ENCODE measurements at regions of chr11 and their contacts with region 1.

Region 1: DNA sequence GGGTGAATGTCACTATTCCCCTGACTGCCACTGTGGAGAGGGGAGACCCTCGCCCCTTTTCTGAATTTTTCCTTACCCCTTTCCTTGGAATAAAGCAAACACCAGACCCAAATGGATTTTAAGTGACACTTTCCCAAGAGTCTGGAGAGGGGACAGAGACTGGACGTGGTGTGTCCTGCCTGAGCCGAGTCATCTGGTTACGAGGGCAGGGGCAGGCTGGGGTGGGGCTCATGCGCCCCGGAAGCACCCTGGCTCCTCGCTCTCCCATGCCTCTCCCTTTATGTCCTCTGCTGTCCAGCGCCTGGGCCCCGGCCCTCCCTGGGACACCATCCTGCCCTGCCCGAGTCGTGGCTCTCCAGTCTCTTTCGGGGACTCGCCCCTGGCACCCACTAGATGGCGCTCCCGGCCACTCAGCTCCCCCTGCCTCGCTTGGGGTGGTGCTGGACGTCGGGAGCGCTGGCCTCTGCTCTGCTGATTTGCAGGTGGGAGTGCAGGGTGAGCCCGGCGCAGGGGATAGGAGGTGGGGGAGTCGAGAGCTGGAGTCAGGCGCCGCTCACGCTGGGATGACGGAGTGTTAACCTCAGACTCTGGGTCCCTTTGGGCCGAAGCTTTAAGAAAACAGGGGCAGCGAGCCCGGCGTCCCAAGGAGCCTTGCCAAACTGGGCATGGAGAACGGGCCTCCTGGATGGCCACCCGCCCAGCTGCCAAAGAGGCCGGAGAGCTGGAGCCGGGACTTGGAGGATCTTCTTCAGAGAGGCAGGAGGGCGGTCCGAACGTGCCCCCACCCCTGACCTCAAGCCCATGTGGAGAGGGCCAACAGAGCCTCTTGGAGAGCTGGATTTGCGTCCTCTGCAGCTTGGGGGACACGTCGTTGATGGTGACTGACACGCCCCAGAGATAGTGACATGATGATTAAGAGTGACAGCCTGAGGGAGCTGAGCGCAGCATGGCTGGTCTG is 89.9 kb downstream of the RPS6KA4 start:
- DNase-seq: peak; percentile 84
- H3K4me3 Mint-ChIP-seq: peak overlapping the region; percentile 57
- H3K27ac Mint-ChIP-seq: no peak overlapping the region
- H3K4me1 Mint-ChIP-seq: peaks cover 13% of the 10 kb centered on the region
- H3K27me3 Mint-ChIP-seq: peaks cover 17% of the 10 kb centered on the region

Region 2: DNA sequence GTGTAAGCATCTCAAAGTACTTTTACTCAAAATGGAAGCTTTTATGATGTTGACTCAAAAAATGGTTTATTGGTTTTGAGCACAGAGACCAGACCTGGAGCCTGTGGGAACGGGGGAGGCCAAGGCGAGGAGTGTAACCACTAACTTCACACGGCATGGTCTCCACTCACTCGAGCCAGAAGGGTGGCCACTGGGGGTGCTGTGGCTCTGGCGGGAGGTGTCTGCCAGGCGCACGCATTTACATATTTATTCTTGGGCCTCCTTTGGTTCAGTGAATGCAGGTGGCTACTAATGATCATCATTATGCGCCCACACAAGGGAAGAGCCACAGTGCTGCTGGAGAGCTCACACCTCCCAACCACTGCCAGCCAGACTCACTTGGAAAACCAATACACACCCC is 348.5 kb before region 1 on chr11:
- CTCF ChIA-PET with region 1: no interaction called
- POLR2A ChIA-PET with region 1: no interaction called
- intact Hi-C with region 1: no loop called
- DNase-seq: no peak
- H3K4me3 Mint-ChIP-seq: no peak overlapping the region
- H3K27ac Mint-ChIP-seq: no peak overlapping the region
- H3K4me1 Mint-ChIP-seq: no peaks in the 10 kb centered on the region
- H3K27me3 Mint-ChIP-seq: no peaks in the 10 kb centered on the region

Region 3: DNA sequence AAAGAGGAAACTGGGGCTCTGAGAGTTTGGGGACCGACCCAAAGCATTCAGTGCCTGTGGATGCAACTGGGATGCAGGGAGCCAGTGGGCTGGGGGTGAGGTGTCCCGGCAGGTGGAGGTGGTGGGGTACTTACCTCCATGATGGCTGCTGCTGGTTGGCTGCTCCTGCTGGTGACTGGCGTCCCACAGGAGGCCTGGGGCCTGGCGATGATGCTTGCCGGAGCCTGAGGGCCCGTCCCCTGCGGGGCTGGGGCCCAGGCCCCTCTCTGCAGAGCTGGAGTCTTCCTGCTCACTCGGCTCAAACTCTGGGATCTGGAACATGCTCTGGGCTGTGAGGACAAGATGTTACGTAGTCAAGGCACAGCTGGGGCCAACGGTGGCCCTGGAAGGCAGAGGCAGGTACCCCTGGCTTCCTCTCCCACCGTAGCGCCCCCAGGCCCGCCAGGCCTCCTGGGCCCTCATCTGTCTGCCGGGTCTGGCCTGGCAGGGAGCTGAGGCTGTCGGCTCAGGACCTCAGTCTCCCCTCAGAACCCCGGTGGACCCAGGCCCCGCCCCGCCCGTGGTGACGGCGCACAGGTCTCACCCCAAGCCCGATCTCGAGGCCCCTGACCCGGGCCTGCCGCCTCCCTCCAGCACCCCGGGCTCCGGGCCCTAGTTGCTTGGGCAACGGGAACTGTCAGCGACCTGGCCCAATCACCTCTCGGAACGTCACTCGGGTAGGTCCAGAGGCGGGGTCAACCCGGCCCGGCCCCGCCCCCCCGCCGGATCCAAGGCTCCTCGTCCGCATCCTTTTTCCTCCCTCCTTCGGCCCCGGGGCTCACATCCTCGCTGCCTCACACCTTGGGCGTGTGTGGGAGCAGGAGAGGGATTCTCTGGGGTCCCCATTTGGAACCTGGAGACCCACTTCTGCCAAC is 164.6 kb before region 1 on chr11 and contains the start of gene BAD:
- CTCF ChIA-PET with region 1: no interaction called
- POLR2A ChIA-PET with region 1: no interaction called
- intact Hi-C with region 1: no loop called
- DNase-seq: peak; percentile 96
- H3K4me3 Mint-ChIP-seq: peak within 1 kb of the TSS; percentile 83
- H3K27ac Mint-ChIP-seq: peak within 1 kb of the TSS; percentile 91
- H3K4me1 Mint-ChIP-seq: peaks cover 14% of the 10 kb centered on the region
- H3K27me3 Mint-ChIP-seq: no peaks in the 10 kb centered on the region
- total RNA-seq, gene BAD: 23.7 to 24.2 TPM

Region 4: GRCh38 chr11:64358907-64359711 is 89.8 kb before region 1 on chr11 and contains the start of gene RPS6KA4:
- CTCF ChIA-PET with region 1: interaction called, 13 read pairs
- POLR2A ChIA-PET with region 1: interaction called, 3 read pairs
- intact Hi-C with region 1: loop called (anchors 2 kb)
- DNase-seq: peak; percentile 68
- H3K4me3 Mint-ChIP-seq: peak within 1 kb of the TSS; percentile 91
- H3K27ac Mint-ChIP-seq: peak within 1 kb of the TSS; percentile 58
- H3K4me1 Mint-ChIP-seq: peaks cover 37% of the 10 kb centered on the region
- H3K27me3 Mint-ChIP-seq: no peaks in the 10 kb centered on the region
- total RNA-seq, gene RPS6KA4: 31.4 to 34.3 TPM

Region 5: DNA sequence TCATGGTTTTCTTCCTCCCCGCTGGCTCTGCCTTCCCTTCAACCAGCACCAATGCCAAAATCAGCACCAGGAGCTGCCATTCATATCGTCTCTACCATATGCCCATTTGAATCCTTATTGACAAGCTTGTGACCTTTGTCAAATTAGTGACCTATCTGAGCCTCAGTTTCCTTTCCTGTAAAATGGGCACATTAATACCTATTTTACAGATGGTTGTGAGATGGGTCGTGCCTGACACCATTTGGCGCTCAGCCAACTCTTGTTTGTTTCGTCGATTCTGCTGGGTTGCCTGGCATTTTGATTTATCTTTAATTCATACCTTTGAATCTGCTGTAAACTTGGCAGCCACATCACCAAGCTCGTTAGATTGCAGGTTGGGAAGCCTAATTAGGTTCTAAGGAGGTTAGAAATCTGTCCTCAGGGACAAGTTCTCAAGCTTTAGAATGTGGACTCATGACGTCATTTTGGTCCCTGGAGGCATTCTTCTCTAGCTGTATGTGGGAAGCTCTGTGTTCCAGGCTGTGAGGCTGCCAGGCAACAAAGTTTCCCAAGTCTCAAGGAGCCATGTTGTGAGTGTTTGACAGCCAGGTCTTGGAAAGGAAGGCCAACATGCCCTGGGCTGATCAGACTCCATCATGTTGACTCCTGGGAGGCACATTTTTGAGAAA is 28.9 kb before region 1 on chr11:
- CTCF ChIA-PET with region 1: interaction called, 14 read pairs
- POLR2A ChIA-PET with region 1: no interaction called
- intact Hi-C with region 1: no loop called
- DNase-seq: no peak
- H3K4me3 Mint-ChIP-seq: no peak overlapping the region
- H3K27ac Mint-ChIP-seq: no peak overlapping the region
- H3K4me1 Mint-ChIP-seq: no peaks in the 10 kb centered on the region
- H3K27me3 Mint-ChIP-seq: peaks cover 4% of the 10 kb centered on the region

Region 6: DNA sequence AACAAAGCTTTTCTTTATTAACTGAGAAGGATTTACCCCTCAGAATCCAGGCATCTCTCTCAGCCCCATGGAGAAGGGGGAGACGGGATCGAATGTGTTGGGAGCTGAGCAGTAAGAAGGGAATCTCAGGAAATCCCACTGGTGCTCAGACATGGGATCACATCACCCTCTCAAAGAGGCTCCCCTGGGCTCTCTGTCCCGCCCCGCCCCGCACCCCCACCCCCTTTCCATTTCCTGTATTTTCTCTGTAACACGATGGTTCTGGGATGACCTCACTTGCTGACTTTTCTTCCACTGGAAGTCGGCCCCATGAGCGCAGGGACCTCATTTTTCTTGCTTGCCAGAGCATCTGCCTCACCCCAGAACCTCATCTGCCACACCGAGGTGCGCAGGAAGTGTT is 10.1 kb after region 1 on chr11:
- CTCF ChIA-PET with region 1: interaction called, 17 read pairs
- POLR2A ChIA-PET with region 1: no interaction called
- intact Hi-C with region 1: no loop called
- DNase-seq: no peak
- H3K4me3 Mint-ChIP-seq: no peak overlapping the region
- H3K27ac Mint-ChIP-seq: no peak overlapping the region
- H3K4me1 Mint-ChIP-seq: no peaks in the 10 kb centered on the region
- H3K27me3 Mint-ChIP-seq: no peaks in the 10 kb centered on the region

Region 7: DNA sequence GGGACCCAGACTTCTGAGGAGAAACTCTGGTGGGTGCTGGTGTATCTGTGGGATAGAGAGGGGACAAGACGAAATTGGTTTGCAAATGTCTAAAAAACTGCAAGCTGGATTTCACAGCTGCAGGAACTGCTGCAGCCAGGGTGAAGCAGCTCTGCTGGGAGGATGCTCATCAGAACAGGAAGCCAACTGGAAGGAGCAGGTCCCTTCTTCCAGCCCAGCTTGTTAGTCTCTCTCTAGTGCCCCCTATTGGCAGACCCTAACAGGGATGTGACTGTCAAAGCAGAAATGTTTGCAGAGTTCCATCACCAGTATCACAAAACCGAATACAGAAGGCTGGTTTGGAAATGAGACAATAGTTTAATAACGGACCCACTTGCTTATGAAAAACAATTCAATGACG is 67.3 kb after region 1 on chr11:
- CTCF ChIA-PET with region 1: interaction called, 10 read pairs
- POLR2A ChIA-PET with region 1: no interaction called
- intact Hi-C with region 1: no loop called
- DNase-seq: peak; percentile 12
- H3K4me3 Mint-ChIP-seq: no peak overlapping the region
- H3K27ac Mint-ChIP-seq: no peak overlapping the region
- H3K4me1 Mint-ChIP-seq: no peaks in the 10 kb centered on the region
- H3K27me3 Mint-ChIP-seq: peaks cover 20% of the 10 kb centered on the region

Region 8: GRCh38 chr11:64723117-64723906 is 274.4 kb after region 1 on chr11 and contains the start of gene NRXN2:
- CTCF ChIA-PET with region 1: interaction called, 3 read pairs
- POLR2A ChIA-PET with region 1: no interaction called
- intact Hi-C with region 1: loop called (anchors 1 kb)
- DNase-seq: peak; percentile 91
- H3K4me3 Mint-ChIP-seq: peak within 1 kb of the TSS; percentile 59
- H3K27ac Mint-ChIP-seq: peak within 1 kb of the TSS; percentile 28
- H3K4me1 Mint-ChIP-seq: peaks cover 6% of the 10 kb centered on the region
- H3K27me3 Mint-ChIP-seq: peaks cover 15% of the 10 kb centered on the region
- total RNA-seq, gene NRXN2: 0.31 to 0.41 TPM

Measured in activated CD4-positive, alpha-beta memory T cell treated with anti-CD3 and anti-CD28 coated beads for 36 hours (primary cell).